WTC11 (cell line): ENCODE measurements at regions of chr2 and their contacts with region 1.

Region 1: GRCh38 chr2:113756355-113757137 is at the start of gene SLC35F5:
- DNase-seq: peak; percentile 92
- ATAC-seq: peak; percentile 97
- H3K4me3 Mint-ChIP-seq: peak within 1 kb of the TSS; percentile 94
- H3K27ac Mint-ChIP-seq: peak within 1 kb of the TSS; percentile 99
- H3K4me1 Mint-ChIP-seq: peaks cover 11% of the 10 kb centered on the region
- H3K27me3 Mint-ChIP-seq: peaks cover 4% of the 10 kb centered on the region; the same call in 1 of the 2 replicates
- CTCF ChIP-seq: no peak
- total RNA-seq, gene SLC35F5: 20.3 to 24.8 TPM (median 23.8 TPM) in 3 replicates

Region 2: GRCh38 chr2:113711851-113712250 is 44.7 kb before region 1 on chr2:
- CTCF ChIA-PET with region 1: no interaction called
- POLR2A ChIA-PET with region 1: no interaction called
- DNase-seq: no peak
- ATAC-seq: no peak
- H3K4me3 Mint-ChIP-seq: no peak overlapping the region
- H3K27ac Mint-ChIP-seq: no peak overlapping the region
- H3K4me1 Mint-ChIP-seq: peaks cover 9% of the 10 kb centered on the region
- H3K27me3 Mint-ChIP-seq: no peaks in the 10 kb centered on the region
- CTCF ChIP-seq: no peak

Region 3: GRCh38 chr2:113848758-113849415 is 92.3 kb after region 1 on chr2:
- CTCF ChIA-PET with region 1: no interaction called
- POLR2A ChIA-PET with region 1: no interaction called
- DNase-seq: no peak
- ATAC-seq: no peak
- H3K4me3 Mint-ChIP-seq: no peak overlapping the region
- H3K27ac Mint-ChIP-seq: no peak overlapping the region
- H3K4me1 Mint-ChIP-seq: no peaks in the 10 kb centered on the region
- H3K27me3 Mint-ChIP-seq: peaks cover 7% of the 10 kb centered on the region
- CTCF ChIP-seq: no peak

Region 4: DNA sequence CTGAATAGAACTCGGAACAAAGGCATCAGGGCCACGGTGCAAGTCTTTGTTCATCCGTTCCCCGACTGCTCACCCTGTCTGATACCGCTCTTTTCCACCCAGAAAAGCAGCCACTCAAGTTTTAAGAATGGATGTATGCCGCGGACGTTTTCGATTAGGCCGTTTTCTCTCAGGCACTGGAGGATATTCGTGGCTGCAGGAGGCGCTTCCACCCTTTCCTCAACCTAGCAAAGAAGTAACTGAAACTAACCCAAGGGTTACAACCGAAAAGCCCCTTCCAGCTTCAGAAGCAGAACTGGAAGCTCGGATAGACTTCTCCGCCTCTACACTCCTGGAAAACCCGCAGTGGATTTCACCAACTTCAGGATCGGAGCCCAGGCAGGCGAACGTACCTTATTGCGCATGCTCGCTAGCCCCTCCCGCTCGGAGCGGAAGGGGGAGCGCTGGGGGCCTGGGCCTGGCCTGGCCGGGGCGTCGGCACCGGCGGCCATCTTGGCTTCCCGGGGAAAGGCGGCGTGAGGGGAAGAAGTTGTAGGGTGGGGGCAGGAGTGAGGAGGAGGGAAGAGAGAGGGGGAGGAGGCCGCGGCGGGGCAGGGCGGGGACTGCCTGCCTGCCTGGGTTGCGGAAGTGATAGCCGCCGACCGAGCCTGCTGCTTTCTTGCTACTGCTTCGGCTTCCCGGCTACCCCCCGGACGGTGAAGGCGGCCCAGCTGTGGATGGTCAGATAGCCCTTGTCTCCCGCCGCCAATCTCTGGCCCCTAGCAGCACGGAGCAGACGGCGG is 133.1 kb after region 1 on chr2 and contains the start of gene ACTR3:
- CTCF ChIA-PET with region 1: interaction called, 3 read pairs
- POLR2A ChIA-PET with region 1: interaction called, 12 read pairs
- DNase-seq: peak; percentile 98
- ATAC-seq: peak; percentile 89
- H3K4me3 Mint-ChIP-seq: peak within 1 kb of the TSS; percentile 96
- H3K27ac Mint-ChIP-seq: peak within 1 kb of the TSS; percentile 100
- H3K4me1 Mint-ChIP-seq: peaks cover 66% of the 10 kb centered on the region
- H3K27me3 Mint-ChIP-seq: no peaks in the 10 kb centered on the region
- CTCF ChIP-seq: no peak
- total RNA-seq, gene ACTR3: 148 to 169 TPM (median 149 TPM) in 3 replicates